ENCODE measurements at regions of chr22 and their contacts with region 1.

Region 1: DNA sequence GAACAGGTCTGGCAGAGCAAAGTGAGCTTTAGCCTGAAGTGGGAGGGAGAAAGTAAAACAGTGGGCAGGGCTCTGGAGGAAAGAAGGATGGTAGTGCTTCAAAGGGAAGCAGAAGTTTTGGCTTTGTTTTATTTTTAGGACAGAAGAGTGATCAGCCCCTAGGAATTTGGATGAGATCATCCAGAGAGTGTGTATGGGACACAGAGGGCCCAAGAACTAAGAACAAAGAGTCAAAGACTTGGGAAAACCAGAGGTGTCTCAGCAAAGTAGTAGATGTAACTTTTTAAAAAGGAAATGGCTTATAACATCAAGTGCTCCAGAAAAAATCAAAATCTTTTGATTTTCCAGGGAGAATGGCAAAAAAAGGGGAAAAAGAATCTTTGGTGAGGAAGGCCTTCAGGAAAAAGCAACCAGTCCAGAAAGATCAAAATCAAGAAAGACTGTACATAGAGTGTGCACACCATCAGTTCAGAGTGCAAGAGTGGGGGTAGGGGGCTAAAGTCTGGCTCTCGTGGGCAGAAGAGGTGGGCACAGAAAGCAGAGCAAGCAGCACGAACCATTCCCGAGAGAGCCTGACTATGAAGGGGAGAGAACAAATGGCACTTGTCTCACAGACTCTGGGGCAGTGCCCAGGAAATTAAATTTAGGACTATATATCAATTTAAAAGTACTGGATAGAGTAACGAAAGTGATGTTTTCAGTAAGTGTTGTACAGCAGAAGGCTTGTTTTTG is 30.0 kb downstream of the MAPK1 start:
- DNase-seq: peak in 1 of 2 donors; percentile 71
- H3K4me3 ChIP-seq: peak overlapping the region in 1 of 2 donors; percentile 34
- H3K27ac ChIP-seq: peak overlapping the region; percentile 87 to 88
- H3K4me1 ChIP-seq: peaks cover 2 to 35% of the 10 kb centered on the region in 2 donors
- H3K27me3 ChIP-seq: no peaks in the 10 kb centered on the region
- CTCF ChIP-seq: no peak

Region 2: DNA sequence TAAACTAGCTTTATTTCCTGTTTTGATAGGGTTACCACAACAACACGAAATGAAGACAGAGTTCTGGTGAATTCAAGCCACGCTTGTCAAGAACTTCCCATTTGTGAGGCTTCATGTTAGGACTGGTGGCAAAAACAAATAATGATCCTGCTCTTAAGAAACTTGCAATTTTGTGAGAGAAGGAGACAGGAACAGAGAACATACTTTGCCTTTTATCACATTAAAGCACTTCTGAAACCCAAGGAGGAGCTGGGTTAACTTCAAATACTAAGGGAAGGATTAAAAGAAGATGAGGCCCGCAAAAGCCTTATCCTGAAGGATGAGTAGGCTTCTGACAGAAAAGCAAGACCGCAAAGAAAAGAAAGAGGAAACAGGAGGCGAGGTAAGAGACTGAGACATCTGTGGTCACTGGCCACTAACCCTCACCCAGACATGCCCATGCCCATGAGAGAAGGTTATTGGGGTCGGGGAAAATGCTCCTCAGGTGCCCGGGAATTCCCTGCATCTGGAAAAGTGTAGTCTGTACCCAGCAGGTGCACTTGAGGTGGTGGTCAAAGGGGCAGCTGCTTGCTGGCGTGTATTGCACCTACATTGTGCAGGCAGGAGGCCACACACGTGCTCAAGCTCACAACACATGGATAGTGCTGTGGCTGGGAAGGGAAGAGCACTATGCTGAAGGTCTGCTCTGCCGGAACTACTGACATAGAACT is 20.5 kb before region 1 on chr22:
- intact Hi-C with region 1: loop called (anchors 2 kb)
- DNase-seq: no peak
- H3K4me3 ChIP-seq: no peak overlapping the region
- H3K27ac ChIP-seq: peak overlapping the region; percentile 67 to 78
- H3K4me1 ChIP-seq: peaks cover 0 to 21% of the 10 kb centered on the region in 2 donors
- H3K27me3 ChIP-seq: no peaks in the 10 kb centered on the region
- CTCF ChIP-seq: no peak

Region 3: GRCh38 chr22:23128269-23129108 is 1291.1 kb after region 1 on chr22:
- intact Hi-C with region 1: no loop called
- DNase-seq: peak in 1 of 2 donors; percentile 81
- H3K4me3 ChIP-seq: no peak overlapping the region
- H3K27ac ChIP-seq: no peak overlapping the region
- H3K4me1 ChIP-seq: no peaks in the 10 kb centered on the region
- H3K27me3 ChIP-seq: no peaks in the 10 kb centered on the region
- CTCF ChIP-seq: peak; percentile 66 to 84 (median 81)